ENCODE measurements at regions of chr11 and their contacts with region 1.

Region 1: DNA sequence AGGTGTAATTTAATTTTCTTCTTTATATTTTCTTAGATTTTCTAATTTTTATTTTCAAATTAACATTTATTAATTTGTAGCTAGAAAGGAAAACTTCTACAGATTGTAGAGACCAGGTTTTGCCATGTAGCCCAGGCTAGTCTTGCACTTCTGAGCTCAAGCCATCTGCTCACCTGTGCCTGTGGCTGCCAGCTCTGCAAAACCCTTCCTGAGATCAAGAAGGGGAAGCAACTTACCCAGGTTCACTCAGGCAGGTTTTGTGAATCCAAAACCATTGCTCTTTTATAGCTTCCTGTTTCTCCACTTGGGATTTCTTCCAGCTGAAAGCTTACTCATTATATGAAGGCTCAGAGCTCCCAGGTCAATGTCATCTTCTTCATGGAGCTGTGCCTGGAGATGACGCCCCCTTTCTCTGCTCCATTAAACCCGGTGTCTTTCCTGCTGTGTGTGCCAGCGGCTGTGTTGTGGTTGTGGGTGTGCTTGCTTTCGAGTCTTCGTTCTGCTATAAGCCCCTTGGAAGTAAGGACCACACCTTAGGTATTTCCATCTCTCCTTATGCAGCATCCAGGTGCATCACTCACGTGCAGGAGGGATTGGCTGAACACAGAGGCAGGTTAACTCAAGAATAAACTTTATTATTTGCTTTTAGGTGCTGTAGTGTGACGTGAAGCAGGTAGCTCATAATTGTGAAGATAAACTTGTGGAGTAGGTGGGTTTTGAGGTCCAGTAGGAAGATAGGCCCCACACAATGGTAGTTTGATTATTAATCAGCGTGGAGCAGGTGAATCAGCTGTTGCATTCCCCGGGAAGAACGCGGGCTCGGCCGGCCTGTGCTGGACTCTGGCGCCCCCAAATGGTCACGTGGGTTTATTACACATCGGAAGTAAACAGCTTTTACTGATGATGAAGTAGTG is 42.2 kb upstream of the INCENP start:
- DNase-seq: peak; percentile 71 to 98 (median 91)

Region 2: GRCh38 chr11:61797263-61797944 is 284.2 kb before region 1 on chr11:
- intact Hi-C with region 1: loop called (anchors 2 kb)
- DNase-seq: peak in 6 of 10 donors; percentile 80 to 94 (median 84)

Region 3: GRCh38 chr11:61899146-61899841 is 182.3 kb before region 1 on chr11:
- intact Hi-C with region 1: loop called (anchors 1 kb)
- DNase-seq: peak; percentile 56 to 95 (median 80)

Measured in posterior cingulate gyrus (tissue), 11 donors.